Transverse colon (tissue), 4 donors: ENCODE measurements at regions of chr6 and their contacts with region 1.

Region 1: DNA sequence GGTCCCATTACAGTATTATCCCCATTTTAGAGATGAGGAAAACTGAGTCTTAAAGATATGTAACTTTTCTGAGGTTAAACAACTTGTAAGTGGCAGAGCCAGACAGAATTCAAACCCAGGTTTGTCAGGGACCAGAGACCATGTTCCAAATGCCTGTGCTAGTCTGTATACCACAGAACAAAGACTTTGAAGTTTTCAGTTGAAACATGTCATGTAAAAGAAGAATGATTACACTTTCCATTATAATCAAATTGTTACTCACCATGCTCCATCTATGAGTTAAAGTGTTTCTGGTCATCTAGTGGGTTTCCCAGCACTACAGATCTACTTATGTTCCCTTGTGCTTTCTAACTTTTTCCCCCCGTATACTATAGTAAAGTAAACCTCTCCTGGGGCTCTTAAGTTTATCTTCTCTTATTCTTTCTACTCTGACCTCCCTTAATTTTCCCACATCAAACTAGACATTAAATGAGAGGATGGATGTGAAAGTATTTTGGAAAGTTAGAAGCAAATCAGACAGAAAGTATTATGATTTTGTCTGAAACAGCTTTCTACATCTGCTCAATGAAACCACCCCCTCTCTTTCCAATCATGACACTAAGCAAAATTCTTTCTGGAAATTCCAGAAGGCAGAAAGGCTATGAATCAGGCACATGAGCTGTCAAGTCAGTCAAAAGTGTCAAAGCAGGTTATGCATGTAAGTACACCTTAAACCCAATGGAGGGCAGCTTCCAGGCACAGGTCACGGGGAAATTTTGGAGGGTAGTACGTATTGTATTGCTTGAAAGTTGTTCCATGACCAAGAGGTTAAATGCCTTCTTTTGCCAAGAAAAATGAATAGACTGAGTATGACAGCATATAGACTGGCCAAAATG is 132.7 kb upstream of the MAP3K7 start:
- DNase-seq: no peak
- H3K4me3 ChIP-seq: no peak overlapping the region
- H3K27ac ChIP-seq: no peak overlapping the region
- H3K4me1 ChIP-seq: no peaks in the 10 kb centered on the region
- H3K27me3 ChIP-seq: no peaks in the 10 kb centered on the region
- CTCF ChIP-seq: no peak
- EP300 ChIP-seq: no peak
- POLR2A ChIP-seq: no peak

Region 2: DNA sequence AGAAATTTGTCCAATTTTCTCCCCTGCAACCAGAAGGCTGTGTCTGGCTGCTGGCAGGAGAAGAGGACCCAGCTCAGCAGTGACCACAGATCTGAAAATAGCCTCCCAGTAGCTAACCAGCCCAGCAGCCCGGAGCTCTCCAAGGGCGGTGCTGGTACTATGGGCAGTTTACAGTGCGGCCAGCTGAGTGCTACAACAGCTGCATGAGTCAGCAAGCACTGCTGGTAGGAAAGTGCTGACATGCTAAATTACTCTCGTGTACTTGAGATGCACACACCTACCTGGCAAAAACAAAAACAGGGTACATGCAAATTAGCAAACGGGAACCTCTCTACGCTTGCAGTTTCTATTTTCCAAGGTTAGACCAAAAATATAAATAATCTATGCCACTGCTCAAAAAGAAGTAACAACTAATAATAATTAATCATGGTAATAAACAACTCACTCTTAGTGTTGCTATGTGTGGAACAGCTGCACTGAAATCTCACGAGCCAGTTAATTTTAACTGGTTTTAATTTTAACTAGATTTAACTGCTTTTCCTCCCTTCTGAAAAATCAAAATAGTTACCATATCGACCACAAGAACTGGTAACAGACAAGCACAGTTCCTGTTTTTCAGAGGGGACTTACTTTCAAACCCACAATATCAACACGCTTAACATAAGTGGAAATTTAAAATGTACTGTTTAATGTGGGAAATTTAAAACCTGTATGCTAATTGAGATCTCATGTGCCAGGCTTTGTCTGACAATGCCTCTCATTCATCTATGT is 433.8 kb before region 1 on chr6:
- in situ Hi-C with region 1: no loop called
- intact Hi-C with region 1: no loop called
- DNase-seq: peak; percentile 77
- H3K4me3 ChIP-seq: peak overlapping the region in 1 of 4 donors; percentile 25
- H3K27ac ChIP-seq: peak overlapping the region; percentile 27 to 49 (median 38)
- H3K4me1 ChIP-seq: peaks cover 0 to 23% (median 5%) of the 10 kb centered on the region in 4 donors
- H3K27me3 ChIP-seq: no peaks in the 10 kb centered on the region
- CTCF ChIP-seq: no peak
- EP300 ChIP-seq: no peak
- POLR2A ChIP-seq: no peak

Region 3: DNA sequence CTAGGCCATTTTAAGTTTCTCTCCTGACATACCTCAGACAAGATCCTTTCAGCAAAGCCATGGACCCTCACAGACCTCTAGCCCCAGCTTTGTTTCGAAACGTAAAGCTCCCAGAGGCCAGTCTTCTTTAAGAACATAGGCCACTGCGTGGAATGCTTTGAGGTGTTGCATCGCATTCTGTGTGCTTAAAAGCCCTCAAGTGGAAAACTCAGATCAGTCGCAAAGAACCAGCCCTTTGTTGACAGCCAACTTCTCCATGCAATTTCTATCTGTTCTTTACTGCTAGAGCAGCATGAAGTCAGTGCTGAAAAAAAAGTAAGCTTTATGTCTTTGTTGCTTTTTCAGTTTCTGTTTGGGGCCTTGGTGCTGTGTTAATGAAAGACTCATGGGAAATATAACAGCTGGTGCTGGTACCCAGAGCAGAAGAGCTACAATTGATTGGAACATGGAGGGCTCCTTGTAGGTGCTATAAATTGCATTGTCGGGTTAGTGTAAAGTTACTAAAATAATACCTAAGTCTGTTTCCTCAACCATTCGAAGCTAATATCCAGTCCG is 275.3 kb before region 1 on chr6:
- in situ Hi-C with region 1: no loop called
- intact Hi-C with region 1: no loop called
- DNase-seq: no peak
- H3K4me3 ChIP-seq: no peak overlapping the region
- H3K27ac ChIP-seq: no peak overlapping the region
- H3K4me1 ChIP-seq: no peaks in the 10 kb centered on the region
- H3K27me3 ChIP-seq: no peaks in the 10 kb centered on the region
- CTCF ChIP-seq: no peak
- EP300 ChIP-seq: no peak
- POLR2A ChIP-seq: no peak

Region 4: DNA sequence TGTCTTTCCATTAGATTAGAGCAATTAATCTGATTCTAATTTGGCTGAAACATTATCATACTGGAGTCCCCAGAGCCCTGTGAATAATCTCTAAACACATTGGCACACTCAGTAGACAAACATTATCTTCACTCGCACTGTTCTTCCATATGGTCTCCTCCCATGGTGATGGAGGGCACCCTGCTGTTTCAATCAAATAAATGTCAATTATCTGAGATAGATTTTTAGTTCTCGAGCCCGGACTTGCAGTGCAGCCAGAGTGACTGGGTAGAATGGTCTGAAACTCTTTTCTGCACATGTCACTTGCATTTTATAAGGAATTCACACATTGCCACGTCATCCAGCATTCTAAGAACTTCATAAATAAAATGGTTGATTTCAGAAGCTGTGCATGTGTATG is 42.1 kb before region 1 on chr6:
- in situ Hi-C with region 1: no loop called
- intact Hi-C with region 1: loop called (anchors 2 kb)
- DNase-seq: no peak
- H3K4me3 ChIP-seq: no peak overlapping the region
- H3K27ac ChIP-seq: no peak overlapping the region
- H3K4me1 ChIP-seq: no peaks in the 10 kb centered on the region
- H3K27me3 ChIP-seq: no peaks in the 10 kb centered on the region
- CTCF ChIP-seq: no peak
- EP300 ChIP-seq: no peak
- POLR2A ChIP-seq: no peak

Region 5: DNA sequence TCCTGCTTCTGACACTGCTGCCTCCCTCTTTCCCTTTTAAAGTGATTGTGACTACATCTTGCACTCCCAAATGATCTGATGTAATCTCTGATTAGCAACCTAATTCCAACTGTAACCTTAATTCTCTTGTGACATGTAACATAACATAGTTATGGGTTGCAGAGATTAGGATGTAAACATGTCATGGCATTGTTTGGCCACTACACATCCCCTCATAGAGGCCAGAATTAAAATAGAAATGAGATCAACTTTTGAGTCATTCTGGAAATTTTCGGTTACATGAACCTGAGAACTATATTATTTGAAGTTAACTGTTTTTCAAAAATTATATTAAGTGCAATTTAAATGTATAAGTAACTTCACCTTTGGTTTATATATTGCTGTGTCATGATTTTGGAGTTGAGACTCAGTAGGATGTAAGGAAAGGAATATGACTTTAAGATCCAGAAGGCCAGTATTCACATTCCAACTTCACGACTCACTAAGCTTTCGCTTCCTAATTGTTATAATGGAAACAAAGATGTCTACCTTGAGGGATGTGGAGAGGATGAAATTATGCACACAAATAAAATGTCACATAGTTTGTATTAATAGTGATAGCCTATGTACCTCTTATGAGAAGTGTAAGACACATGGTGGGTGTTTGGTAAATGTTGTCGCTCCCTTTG is 479.2 kb after region 1 on chr6:
- in situ Hi-C with region 1: no loop called
- intact Hi-C with region 1: no loop called
- DNase-seq: no peak
- H3K4me3 ChIP-seq: no peak overlapping the region
- H3K27ac ChIP-seq: no peak overlapping the region
- H3K4me1 ChIP-seq: no peaks in the 10 kb centered on the region
- H3K27me3 ChIP-seq: no peaks in the 10 kb centered on the region
- CTCF ChIP-seq: no peak
- EP300 ChIP-seq: no peak
- POLR2A ChIP-seq: no peak

Region 6: GRCh38 chr6:91428953-91429560 is 709.5 kb after region 1 on chr6:
- in situ Hi-C with region 1: no loop called
- intact Hi-C with region 1: no loop called
- DNase-seq: no peak
- H3K4me3 ChIP-seq: no peak overlapping the region
- H3K27ac ChIP-seq: no peak overlapping the region
- H3K4me1 ChIP-seq: no peaks in the 10 kb centered on the region
- H3K27me3 ChIP-seq: no peaks in the 10 kb centered on the region
- CTCF ChIP-seq: peak in 2 of 5 experiments; percentile 9 to 42
- EP300 ChIP-seq: no peak
- POLR2A ChIP-seq: no peak